HCT116 (cell line): ENCODE measurements at regions of chr10 and their contacts with region 1.

Region 1: DNA sequence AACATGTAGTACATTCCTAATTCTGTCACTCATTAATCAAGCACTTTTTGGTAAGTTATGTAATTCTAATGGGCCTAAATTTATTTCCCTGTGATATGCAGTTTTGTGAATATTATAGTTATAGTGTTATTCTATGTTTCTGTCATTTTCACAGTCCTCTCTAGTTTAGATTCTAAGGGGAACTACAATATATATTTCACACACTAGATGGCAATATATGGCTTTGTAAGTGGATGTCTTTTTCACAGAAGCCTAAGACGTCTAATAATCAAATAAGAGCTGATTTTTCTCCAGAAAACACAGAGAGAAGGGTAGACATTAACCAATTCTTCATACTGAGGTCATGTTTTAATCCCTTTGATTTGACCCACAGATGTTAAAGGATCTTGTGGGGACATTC is 18.0 kb downstream of the RNLS start:
- DNase-seq: peak; percentile 12
- ATAC-seq: peak; percentile 80
- H3K4me3 ChIP-seq: no peak overlapping the region
- H3K27ac ChIP-seq: no peak overlapping the region
- H3K4me1 ChIP-seq: no peaks in the 10 kb centered on the region
- H3K27me3 ChIP-seq: no peaks in the 10 kb centered on the region
- CTCF ChIP-seq: peak; percentile 29 to 67 (median 64)
- POLR2A ChIP-seq: no peak
- RAD21 ChIP-seq: peak; percentile 82

Region 2: GRCh38 chr10:88401671-88402347 is 163.3 kb before region 1 on chr10:
- CTCF ChIA-PET with region 1: no interaction called
- POLR2A ChIA-PET with region 1: no interaction called
- RAD21 ChIA-PET with region 1: no interaction called
- intact Hi-C with region 1: no loop called
- DNase-seq: no peak
- ATAC-seq: peak; percentile 92
- H3K4me3 ChIP-seq: no peak overlapping the region
- H3K27ac ChIP-seq: no peak overlapping the region
- H3K4me1 ChIP-seq: peaks cover 0 to 10% of the 10 kb centered on the region in 2 experiments; a peak in 2 of 4 replicates
- H3K27me3 ChIP-seq: no peaks in the 10 kb centered on the region
- CTCF ChIP-seq: peak in 2 of 3 experiments; percentile 36 to 49; a peak in 3 of 6 replicates
- POLR2A ChIP-seq: no peak
- RAD21 ChIP-seq: peak; percentile 58

Region 3: GRCh38 chr10:88728107-88728763 is 163.2 kb after region 1 on chr10:
- CTCF ChIA-PET with region 1: interaction called, 15 read pairs
- POLR2A ChIA-PET with region 1: no interaction called
- RAD21 ChIA-PET with region 1: no interaction called
- intact Hi-C with region 1: no loop called
- DNase-seq: peak; percentile 54
- ATAC-seq: peak; percentile 92
- H3K4me3 ChIP-seq: no peak overlapping the region
- H3K27ac ChIP-seq: no peak overlapping the region
- H3K4me1 ChIP-seq: no peaks in the 10 kb centered on the region
- H3K27me3 ChIP-seq: no peaks in the 10 kb centered on the region
- CTCF ChIP-seq: peak; percentile 80 to 97 (median 83)
- POLR2A ChIP-seq: no peak
- RAD21 ChIP-seq: peak; percentile 65

Region 4: GRCh38 chr10:88791924-88792323 is 226.9 kb after region 1 on chr10:
- CTCF ChIA-PET with region 1: interaction called, 9 read pairs
- POLR2A ChIA-PET with region 1: no interaction called
- RAD21 ChIA-PET with region 1: interaction called in 1 of 2 experiments, 3 read pairs
- intact Hi-C with region 1: loop called (anchors 5 kb)
- DNase-seq: peak; percentile 32
- ATAC-seq: peak; percentile 94
- H3K4me3 ChIP-seq: no peak overlapping the region
- H3K27ac ChIP-seq: no peak overlapping the region
- H3K4me1 ChIP-seq: peaks cover 6 to 10% of the 10 kb centered on the region in 2 experiments; a peak in 3 of 4 replicates
- H3K27me3 ChIP-seq: no peaks in the 10 kb centered on the region
- CTCF ChIP-seq: peak; percentile 66 to 77 (median 77)
- POLR2A ChIP-seq: no peak
- RAD21 ChIP-seq: peak; percentile 57

Region 5: GRCh38 chr10:88810196-88810961 is 245.3 kb after region 1 on chr10:
- CTCF ChIA-PET with region 1: interaction called, 26 read pairs
- POLR2A ChIA-PET with region 1: no interaction called
- RAD21 ChIA-PET with region 1: interaction called, 4 to 6 read pairs
- intact Hi-C with region 1: loop called (anchors 1 kb)
- DNase-seq: peak; percentile 60
- ATAC-seq: peak; percentile 98
- H3K4me3 ChIP-seq: no peak overlapping the region
- H3K27ac ChIP-seq: no peak overlapping the region
- H3K4me1 ChIP-seq: no peaks in the 10 kb centered on the region
- H3K27me3 ChIP-seq: no peaks in the 10 kb centered on the region
- CTCF ChIP-seq: peak; percentile 83 to 86 (median 84)
- POLR2A ChIP-seq: no peak
- RAD21 ChIP-seq: peak; percentile 82

Region 6: GRCh38 chr10:88932539-88933256 is 367.6 kb after region 1 on chr10:
- CTCF ChIA-PET with region 1: interaction called, 41 read pairs
- POLR2A ChIA-PET with region 1: no interaction called
- RAD21 ChIA-PET with region 1: interaction called, 3 to 5 read pairs
- intact Hi-C with region 1: loop called (anchors 1 kb)
- DNase-seq: peak; percentile 46
- ATAC-seq: peak; percentile 85
- H3K4me3 ChIP-seq: no peak overlapping the region
- H3K27ac ChIP-seq: no peak overlapping the region
- H3K4me1 ChIP-seq: peaks cover 7 to 16% of the 10 kb centered on the region in 2 experiments; a peak in 3 of 4 replicates
- H3K27me3 ChIP-seq: no peaks in the 10 kb centered on the region
- CTCF ChIP-seq: peak; percentile 78 to 94 (median 93)
- POLR2A ChIP-seq: no peak
- RAD21 ChIP-seq: peak; percentile 96